Breast epithelium (tissue), 4 donors: ENCODE measurements at regions of chr19 and their contacts with region 1.

Region 1: GRCh38 chr19:40811478-40812341 is 12.7 kb downstream of the EGLN2 start:
- DNase-seq: no peak
- H3K4me3 ChIP-seq: peak overlapping the region; percentile 29 to 68 (median 50)
- H3K27ac ChIP-seq: peak overlapping the region; percentile 81
- H3K4me1 ChIP-seq: peaks cover 7 to 13% of the 10 kb centered on the region in 2 donors
- H3K27me3 ChIP-seq: no peaks in the 10 kb centered on the region
- CTCF ChIP-seq: no peak
- POLR2A ChIP-seq: no peak

Region 2: DNA sequence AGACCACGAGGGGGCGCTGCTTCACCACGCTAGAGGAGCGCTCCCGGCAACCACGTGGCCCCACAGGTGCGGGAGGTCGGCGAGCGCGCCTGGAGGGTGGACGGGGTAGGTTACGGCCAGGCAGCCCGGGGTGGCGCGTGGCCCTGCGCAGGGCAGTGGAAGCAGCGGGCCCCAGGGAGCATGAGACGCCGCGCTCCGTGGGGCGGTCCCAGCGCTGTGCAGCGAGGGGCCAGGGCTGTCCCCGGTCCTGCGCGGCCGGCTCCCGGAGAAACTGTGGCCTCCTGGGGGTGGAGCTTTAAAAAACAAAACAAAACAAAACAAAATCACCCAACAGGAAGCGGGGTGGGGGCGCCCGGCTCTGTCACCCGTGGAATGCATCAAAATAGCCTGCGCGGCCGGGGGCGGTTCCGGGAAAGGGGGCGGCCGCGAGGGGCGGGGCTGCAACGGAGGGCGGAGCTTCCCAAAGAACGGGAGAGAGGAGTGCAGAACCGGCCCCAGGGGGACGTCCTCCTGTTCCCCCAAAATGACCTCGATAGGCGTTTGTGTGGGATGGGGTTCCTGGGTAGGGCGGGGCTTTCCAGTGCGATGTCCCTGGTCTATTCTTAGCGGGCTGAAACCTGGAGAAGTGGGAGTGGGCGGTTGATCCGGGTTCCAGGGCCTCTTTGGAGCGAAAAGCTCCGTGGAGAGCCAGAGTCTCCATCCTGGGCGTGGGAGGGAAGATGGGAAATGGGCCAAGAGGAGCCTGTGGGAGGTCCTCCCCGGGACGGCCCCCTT is 148.6 kb before region 1 on chr19:
- intact Hi-C with region 1: loop called (anchors 10 kb)
- DNase-seq: peak; percentile 88
- H3K4me3 ChIP-seq: peak overlapping the region; percentile 54 to 81 (median 69)
- H3K27ac ChIP-seq: peak overlapping the region; percentile 80 to 91
- H3K4me1 ChIP-seq: no peaks in the 10 kb centered on the region
- H3K27me3 ChIP-seq: no peaks in the 10 kb centered on the region
- CTCF ChIP-seq: peak in 2 of 3 donors; percentile 99
- POLR2A ChIP-seq: no peak